ENCODE measurements at regions of chr2 and their contacts with region 1.

Region 1: DNA sequence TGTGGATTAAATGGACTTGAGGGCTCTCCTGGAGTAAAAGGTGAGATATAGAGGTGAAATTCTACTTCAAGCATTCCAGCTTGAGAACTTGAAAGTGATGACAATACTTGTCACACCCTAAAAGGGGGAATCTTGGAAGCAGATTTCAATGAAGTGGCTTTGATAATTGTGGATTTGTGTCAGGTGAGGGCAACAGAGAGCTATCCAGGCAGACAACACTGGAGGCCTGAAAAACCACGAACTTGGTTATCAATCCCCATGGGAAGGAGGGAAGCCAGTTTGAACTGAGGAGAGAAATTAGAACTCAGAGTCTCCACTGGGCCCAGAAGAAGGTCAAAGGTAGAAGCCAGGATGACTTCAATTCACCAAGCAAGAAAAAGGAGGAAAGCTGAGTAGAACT is 263.9 kb downstream of the FIGN start:
- DNase-seq: peak; percentile 43
- ATAC-seq: peak; percentile 54
- H3K4me3 ChIP-seq: no peak overlapping the region
- H3K27ac ChIP-seq: no peak overlapping the region
- H3K4me1 ChIP-seq: no peaks in the 10 kb centered on the region
- H3K27me3 ChIP-seq: peaks cover 61% of the 10 kb centered on the region
- CTCF ChIP-seq: peak; percentile 57

Region 2: DNA sequence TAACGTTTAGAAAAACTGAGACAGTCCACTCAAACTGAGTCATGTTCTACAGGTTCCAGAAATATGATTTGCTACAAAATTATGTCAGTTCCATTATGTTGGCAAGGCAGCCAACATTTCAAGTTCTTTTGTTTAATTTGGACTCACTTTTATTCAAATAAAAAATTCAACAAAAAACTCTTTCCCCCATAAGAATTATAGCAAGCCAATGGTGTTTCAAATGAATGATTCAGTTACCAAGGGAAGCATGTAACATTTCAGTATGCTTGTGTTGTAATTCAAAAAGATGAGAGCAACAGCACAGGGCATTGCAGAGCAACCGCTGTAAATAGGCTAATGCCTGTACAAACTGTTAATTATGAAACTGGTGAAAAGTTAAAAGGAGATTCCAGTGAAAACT is 123.1 kb after region 1 on chr2:
- CTCF ChIA-PET with region 1: no interaction called
- POLR2A ChIA-PET with region 1: no interaction called
- intact Hi-C with region 1: loop called (anchors 5 kb)
- DNase-seq: peak; percentile 34
- ATAC-seq: peak; percentile 77
- H3K4me3 ChIP-seq: no peak overlapping the region
- H3K27ac ChIP-seq: no peak overlapping the region
- H3K4me1 ChIP-seq: 0 out of 2 replicates have a peak, but pooled peaks cover 3% of the 10 kb centered on the region
- H3K27me3 ChIP-seq: no peaks in the 10 kb centered on the region
- CTCF ChIP-seq: no peak

Region 3: GRCh38 chr2:163617517-163617916 is 145.6 kb after region 1 on chr2:
- CTCF ChIA-PET with region 1: no interaction called
- POLR2A ChIA-PET with region 1: no interaction called
- intact Hi-C with region 1: loop called (anchors 5 kb)
- DNase-seq: no peak
- ATAC-seq: no peak
- H3K4me3 ChIP-seq: no peak overlapping the region
- H3K27ac ChIP-seq: no peak overlapping the region
- H3K4me1 ChIP-seq: no peaks in the 10 kb centered on the region
- H3K27me3 ChIP-seq: no peaks in the 10 kb centered on the region
- CTCF ChIP-seq: no peak

Region 4: GRCh38 chr2:163878531-163879117 is 406.7 kb after region 1 on chr2:
- CTCF ChIA-PET with region 1: no interaction called
- POLR2A ChIA-PET with region 1: no interaction called
- intact Hi-C with region 1: loop called (anchors 5 kb)
- DNase-seq: peak; percentile 61
- ATAC-seq: peak; percentile 49; the same call in 1 of the 2 replicates
- H3K4me3 ChIP-seq: no peak overlapping the region
- H3K27ac ChIP-seq: no peak overlapping the region
- H3K4me1 ChIP-seq: peaks cover 7% of the 10 kb centered on the region
- H3K27me3 ChIP-seq: no peaks in the 10 kb centered on the region
- CTCF ChIP-seq: peak; percentile 84

Region 5: GRCh38 chr2:164061129-164061746 is 589.3 kb after region 1 on chr2:
- CTCF ChIA-PET with region 1: no interaction called
- POLR2A ChIA-PET with region 1: no interaction called
- intact Hi-C with region 1: loop called (anchors 1 kb)
- DNase-seq: peak; percentile 69
- ATAC-seq: peak; percentile 45
- H3K4me3 ChIP-seq: no peak overlapping the region
- H3K27ac ChIP-seq: no peak overlapping the region
- H3K4me1 ChIP-seq: no peaks in the 10 kb centered on the region
- H3K27me3 ChIP-seq: peaks cover 32% of the 10 kb centered on the region
- CTCF ChIP-seq: peak; percentile 93

Region 6: DNA sequence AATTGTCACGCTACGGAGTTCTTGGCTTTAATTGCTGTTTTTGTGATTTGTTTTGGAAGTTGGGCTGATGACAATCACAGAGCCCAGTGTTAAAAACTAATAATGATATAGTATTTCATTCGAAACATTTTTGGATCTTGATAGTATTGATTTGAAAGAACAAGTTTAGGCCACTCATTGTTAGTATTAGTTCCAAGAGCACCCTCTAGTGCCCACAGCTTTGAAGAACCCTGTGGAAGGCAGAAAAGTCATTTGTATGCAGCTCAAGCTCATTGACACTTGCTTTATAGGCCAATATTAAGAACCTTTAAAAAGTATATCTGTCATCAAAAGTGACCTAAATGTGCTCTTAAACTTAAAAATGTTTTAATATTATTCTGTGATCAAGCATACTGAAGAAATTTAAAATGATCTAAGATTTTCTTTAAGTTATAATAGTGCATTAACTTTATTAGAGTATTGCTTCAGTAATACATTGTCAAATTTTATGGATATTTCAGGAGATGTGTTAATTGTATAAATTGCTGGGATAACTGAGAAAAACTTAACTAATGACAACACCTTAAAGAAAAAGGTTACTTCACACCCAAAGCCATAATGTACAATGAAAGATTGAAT is 958.3 kb after region 1 on chr2:
- CTCF ChIA-PET with region 1: no interaction called
- POLR2A ChIA-PET with region 1: no interaction called
- intact Hi-C with region 1: loop called (anchors 10 kb)
- DNase-seq: peak; percentile 64
- ATAC-seq: no peak
- H3K4me3 ChIP-seq: no peak overlapping the region
- H3K27ac ChIP-seq: no peak overlapping the region
- H3K4me1 ChIP-seq: no peaks in the 10 kb centered on the region
- H3K27me3 ChIP-seq: peaks cover 78% of the 10 kb centered on the region
- CTCF ChIP-seq: peak; percentile 83